T-cell (primary cell): ENCODE measurements at regions of chr14 and their contacts with region 1.

Region 1: GRCh38 chr14:99497894-99498293 is 16.7 kb downstream of the CCNK start:
- DNase-seq: no peak
- ATAC-seq: no peak
- H3K4me3 ChIP-seq: no peak overlapping the region
- H3K4me3 Mint-ChIP-seq: no peak overlapping the region
- H3K27ac ChIP-seq: no peak overlapping the region
- H3K27ac Mint-ChIP-seq: no peak overlapping the region
- H3K4me1 ChIP-seq: no peaks in the 10 kb centered on the region
- H3K4me1 Mint-ChIP-seq: peaks cover 5 to 13% (median 6%) of the 10 kb centered on the region in 3 donors
- H3K27me3 ChIP-seq: no peaks in the 10 kb centered on the region
- H3K27me3 Mint-ChIP-seq: no peaks in the 10 kb centered on the region

Region 2: DNA sequence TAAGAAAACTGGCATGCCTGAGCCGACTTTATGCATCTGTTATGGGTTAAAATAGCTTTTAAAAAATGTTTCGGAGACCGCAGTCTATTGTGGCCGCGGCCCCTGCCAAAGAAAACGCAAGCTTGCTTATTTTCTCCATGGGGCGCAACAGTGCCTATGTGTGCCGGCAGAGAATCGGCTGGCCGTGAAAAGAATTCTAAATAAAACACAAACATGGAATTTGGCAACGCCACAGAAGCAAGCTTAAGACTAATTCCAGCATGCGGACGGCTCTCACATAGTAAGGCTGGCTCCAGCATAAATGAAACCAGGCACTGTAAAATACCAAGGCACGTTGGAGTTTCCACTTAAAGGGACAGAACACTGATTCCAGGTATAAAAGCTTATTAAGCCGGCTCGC is 282.6 kb before region 1 on chr14:
- CTCF ChIA-PET with region 1: no interaction called
- POLR2A ChIA-PET with region 1: no interaction called
- DNase-seq: no peak
- ATAC-seq: no peak
- H3K4me3 ChIP-seq: peak overlapping the region in 1 of 2 donors; percentile 28
- H3K4me3 Mint-ChIP-seq: peak overlapping the region; percentile 66 to 89 (median 74)
- H3K27ac ChIP-seq: peak overlapping the region; percentile 27
- H3K27ac Mint-ChIP-seq: peak overlapping the region; percentile 87 to 97
- H3K4me1 ChIP-seq: peaks cover 70 to 99% of the 10 kb centered on the region in 2 experiments
- H3K4me1 Mint-ChIP-seq: peaks cover 94 to 100% (median 96%) of the 10 kb centered on the region in 3 donors
- H3K27me3 ChIP-seq: no peaks in the 10 kb centered on the region
- H3K27me3 Mint-ChIP-seq: no peaks in the 10 kb centered on the region

Region 3: DNA sequence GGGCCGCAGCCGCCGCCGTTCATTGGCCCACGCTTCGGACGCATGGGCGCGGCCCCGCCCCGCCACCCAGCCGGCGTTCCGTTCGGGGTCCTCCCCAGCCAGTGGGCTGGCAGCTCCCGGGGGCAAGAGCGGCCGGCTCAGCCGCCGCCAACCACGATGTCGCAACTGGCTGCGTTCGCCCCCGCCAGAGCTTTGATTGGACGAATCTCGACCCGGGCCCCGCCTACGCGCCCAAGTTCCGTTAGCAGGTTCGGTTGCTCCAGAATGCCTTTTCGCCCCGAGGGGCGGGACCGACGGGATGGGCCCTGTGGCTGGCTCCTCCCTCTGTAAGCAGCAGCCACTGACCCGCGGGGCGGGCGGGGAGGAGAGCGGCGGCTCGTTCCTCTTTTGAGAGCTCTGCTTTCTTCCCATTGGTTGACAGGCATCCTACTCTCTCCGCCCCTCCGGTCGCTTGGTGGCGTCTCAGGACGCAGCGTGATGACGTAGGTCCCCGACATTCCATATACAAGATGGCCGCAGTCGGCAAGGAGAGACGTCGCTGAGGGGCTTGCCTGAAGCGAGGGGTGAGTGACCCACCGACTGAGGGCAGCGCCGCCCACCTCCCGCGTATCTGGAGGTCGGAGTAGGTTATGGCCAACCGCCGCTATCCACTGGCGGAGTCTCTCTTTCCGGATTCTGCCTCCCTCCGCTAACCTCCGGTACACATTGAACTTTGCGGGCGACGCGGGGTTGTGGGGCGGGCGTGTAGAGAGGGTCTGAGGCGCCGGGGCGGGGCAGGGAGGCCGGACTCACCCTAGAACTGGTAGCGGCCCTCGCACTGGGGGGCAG is 16.8 kb before region 1 on chr14 and contains the start of gene CCNK:
- CTCF ChIA-PET with region 1: no interaction called
- POLR2A ChIA-PET with region 1: interaction called in 1 of 2 experiments, 11 read pairs
- DNase-seq: peak; percentile 99 to 100 (median 100)
- ATAC-seq: peak; percentile 86 to 89 (median 86)
- H3K4me3 ChIP-seq: peak within 1 kb of the TSS; percentile 96 to 99
- H3K4me3 Mint-ChIP-seq: peak within 1 kb of the TSS; percentile 90 to 98 (median 96)
- H3K27ac ChIP-seq: peak within 1 kb of the TSS; percentile 87
- H3K27ac Mint-ChIP-seq: peak within 1 kb of the TSS; percentile 95 to 98
- H3K4me1 ChIP-seq: peaks cover 20 to 23% of the 10 kb centered on the region in 2 experiments
- H3K4me1 Mint-ChIP-seq: peaks cover 65 to 67% (median 65%) of the 10 kb centered on the region in 3 donors
- H3K27me3 ChIP-seq: no peaks in the 10 kb centered on the region
- H3K27me3 Mint-ChIP-seq: no peaks in the 10 kb centered on the region
- total RNA-seq, gene CCNK: 61.8 to 138 (median 74.6) TPM